ENCODE measurements at regions of chr5 and their contacts with region 1.

Region 1: GRCh38 chr5:115625579-115626444 is at the start of gene TMED7:
- DNase-seq: peak; percentile 99
- H3K4me3 ChIP-seq: peak within 1 kb of the TSS; percentile 86 to 98 (median 90)
- H3K27ac ChIP-seq: peak within 1 kb of the TSS; percentile 83
- H3K4me1 ChIP-seq: peaks cover 30% of the 10 kb centered on the region
- H3K27me3 ChIP-seq: no peaks in the 10 kb centered on the region
- CTCF ChIP-seq: no peak
- POLR2A ChIP-seq: peak; percentile 96
- total RNA-seq, gene TMED7: 101 TPM in 2 replicates

Region 2: DNA sequence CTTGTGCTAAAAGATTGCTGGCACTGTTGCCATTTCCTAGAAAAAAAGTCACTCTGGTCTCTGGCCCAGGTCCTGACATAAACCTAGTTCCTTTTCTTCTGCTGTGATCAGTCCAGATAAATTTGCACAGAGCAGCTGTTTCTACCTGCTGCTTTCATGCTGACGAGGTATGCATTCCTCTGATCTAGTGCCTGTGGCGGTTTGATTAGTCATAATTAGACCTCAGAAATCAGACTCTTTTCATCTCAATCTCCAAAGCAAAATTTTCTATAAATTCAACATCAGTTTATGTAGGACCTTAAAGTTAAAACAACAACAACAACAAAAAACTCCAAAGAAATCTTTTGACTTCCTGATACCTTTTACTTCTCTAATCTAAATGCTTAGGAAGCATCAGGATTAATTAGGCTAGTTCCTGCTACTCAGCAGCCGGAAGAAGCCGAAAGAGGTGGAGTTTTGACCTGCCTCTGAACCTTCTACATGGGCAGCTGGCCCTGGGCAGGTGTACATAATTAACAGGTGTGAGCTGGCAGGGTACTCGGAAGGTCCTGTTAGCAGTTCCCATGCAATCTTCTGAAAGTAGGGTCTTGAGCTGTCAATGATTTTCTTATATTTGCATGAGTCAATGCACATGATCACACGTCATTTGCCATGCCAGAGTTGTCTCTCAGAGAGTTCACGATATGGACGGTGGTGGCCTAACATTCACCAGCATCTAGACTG is 246.0 kb before region 1 on chr5:
- CTCF ChIA-PET with region 1: no interaction called
- POLR2A ChIA-PET with region 1: no interaction called
- dilution Hi-C with region 1: no loop called
- intact Hi-C with region 1: no loop called
- DNase-seq: no peak
- H3K4me3 ChIP-seq: no peak overlapping the region
- H3K27ac ChIP-seq: no peak overlapping the region
- H3K4me1 ChIP-seq: peaks cover 7% of the 10 kb centered on the region
- H3K27me3 ChIP-seq: no peaks in the 10 kb centered on the region
- CTCF ChIP-seq: no peak
- POLR2A ChIP-seq: no peak

Region 3: GRCh38 chr5:115601701-115602590 is 23.9 kb before region 1 on chr5 and contains the start of gene TICAM2:
- CTCF ChIA-PET with region 1: no interaction called
- POLR2A ChIA-PET with region 1: no interaction called
- dilution Hi-C with region 1: no loop called
- intact Hi-C with region 1: loop called (anchors 2 kb)
- DNase-seq: peak; percentile 57
- H3K4me3 ChIP-seq: peak within 1 kb of the TSS; percentile 55 to 88 (median 65)
- H3K27ac ChIP-seq: peak within 1 kb of the TSS; percentile 67
- H3K4me1 ChIP-seq: peaks cover 16% of the 10 kb centered on the region
- H3K27me3 ChIP-seq: no peaks in the 10 kb centered on the region
- CTCF ChIP-seq: peak in 1 of 2 donors; percentile 37
- POLR2A ChIP-seq: peak; percentile 34
- total RNA-seq, gene TICAM2: 3.2 and 3.5 TPM in 2 replicates

Region 4: GRCh38 chr5:115977988-115978387 is 352.2 kb after region 1 on chr5:
- CTCF ChIA-PET with region 1: no interaction called
- POLR2A ChIA-PET with region 1: no interaction called
- dilution Hi-C with region 1: no loop called
- intact Hi-C with region 1: loop called (anchors 5 kb)
- DNase-seq: peak; percentile 90
- H3K4me3 ChIP-seq: no peak overlapping the region
- H3K27ac ChIP-seq: peak overlapping the region; percentile 45
- H3K4me1 ChIP-seq: peaks cover 19% of the 10 kb centered on the region
- H3K27me3 ChIP-seq: no peaks in the 10 kb centered on the region
- CTCF ChIP-seq: no peak
- POLR2A ChIP-seq: peak; percentile 54